ENCODE measurements at regions of chr2 and their contacts with region 1.

Region 1: DNA sequence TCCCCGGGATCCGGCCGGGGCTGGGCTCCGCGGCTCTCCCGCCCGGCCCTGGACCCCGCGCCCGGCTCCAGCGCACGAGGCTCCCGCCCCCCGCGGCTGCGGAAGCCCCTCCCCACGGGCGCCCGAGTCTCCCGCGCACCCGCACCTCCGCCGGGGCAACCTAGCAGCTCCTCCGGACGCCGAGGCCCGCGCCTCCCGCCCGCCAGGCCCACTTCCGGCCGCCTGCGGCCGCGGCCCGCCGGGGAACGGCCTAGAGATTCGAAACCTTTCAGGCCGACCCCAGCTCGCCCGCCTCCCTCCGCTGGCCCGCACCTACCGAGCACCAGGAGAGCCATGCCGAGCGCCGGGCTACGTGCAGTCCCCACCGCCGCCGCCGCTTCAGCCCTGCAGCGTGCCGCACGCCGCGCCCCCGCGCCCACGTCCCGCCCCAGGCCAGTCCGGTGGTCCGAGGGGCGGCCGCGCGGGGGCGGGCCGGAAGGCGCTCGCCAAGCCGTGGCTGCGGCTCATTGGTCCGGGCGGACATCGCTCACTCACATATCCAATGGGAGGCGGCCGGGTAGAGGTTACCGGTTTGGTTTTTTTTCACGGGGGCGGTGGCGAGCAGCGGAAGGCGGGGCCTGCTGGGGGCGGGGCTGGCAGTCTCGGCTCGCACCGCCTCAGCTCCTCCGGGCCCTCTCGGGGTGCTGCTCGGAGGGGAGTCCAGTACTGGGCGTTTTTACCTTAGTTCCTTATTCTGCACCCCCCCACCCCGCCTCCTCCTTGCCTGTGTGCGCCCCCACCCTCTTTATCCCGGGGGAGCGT is at the start of gene PDIA6:
- DNase-seq: peak; percentile 98
- total RNA-seq, gene PDIA6: 130 TPM

Region 2: GRCh38 chr2:10691521-10691920 is 121.0 kb before region 1 on chr2:
- intact Hi-C with region 1: loop called (anchors 5 kb)
- DNase-seq: no peak

Region 3: DNA sequence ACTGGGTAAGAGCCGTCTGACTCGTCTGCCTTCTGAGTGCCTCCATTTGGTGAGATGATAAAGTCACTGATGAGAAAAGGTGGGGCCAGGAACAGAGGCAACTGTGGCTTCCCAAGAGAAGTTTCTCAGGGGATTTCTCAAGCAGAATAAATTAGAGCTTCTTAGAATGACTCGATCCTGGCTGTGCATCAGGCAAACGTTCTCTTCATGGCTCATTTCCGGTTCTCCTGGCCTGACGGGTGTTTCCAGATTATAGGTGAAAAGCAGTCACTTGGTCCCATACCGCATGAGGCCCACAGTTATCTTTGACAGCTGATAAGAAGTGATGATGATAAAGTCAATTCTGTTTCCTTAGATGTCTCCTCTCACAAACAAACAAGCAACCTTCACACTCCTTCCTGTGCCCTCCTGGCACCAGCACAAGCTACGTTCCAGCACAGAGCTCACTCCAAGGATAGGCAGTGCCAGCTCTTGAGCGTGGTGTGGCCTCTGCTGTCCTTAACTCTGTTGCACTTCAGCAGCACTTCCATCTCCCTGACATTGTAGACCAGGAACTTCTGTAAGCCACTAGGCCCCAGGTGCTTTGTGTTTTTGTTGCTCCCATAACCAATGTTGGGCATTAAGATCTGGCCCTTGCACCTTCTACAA is 61.4 kb after region 1 on chr2:
- intact Hi-C with region 1: no loop called
- DNase-seq: peak; percentile 74

Region 4: GRCh38 chr2:11530936-11531361 is 718.4 kb after region 1 on chr2:
- intact Hi-C with region 1: no loop called
- DNase-seq: no peak

Measured in cardiac septum (tissue), 1 donor.